ENCODE measurements at regions of chr3 and their contacts with region 1.

Region 1: GRCh38 chr3:32240159-32240545 is 1.7 kb downstream of the CMTM8 start:
- DNase-seq: no peak
- H3K4me3 ChIP-seq: peak overlapping the region in 2 of 3 donors; percentile 86 to 87
- H3K27ac ChIP-seq: peak overlapping the region in 1 of 2 donors; percentile 87
- H3K4me1 ChIP-seq: no peaks in the 10 kb centered on the region
- H3K27me3 ChIP-seq: no peaks in the 10 kb centered on the region
- CTCF ChIP-seq: peak in 1 of 3 donors; percentile 10
- POLR2A ChIP-seq: no peak

Region 2: DNA sequence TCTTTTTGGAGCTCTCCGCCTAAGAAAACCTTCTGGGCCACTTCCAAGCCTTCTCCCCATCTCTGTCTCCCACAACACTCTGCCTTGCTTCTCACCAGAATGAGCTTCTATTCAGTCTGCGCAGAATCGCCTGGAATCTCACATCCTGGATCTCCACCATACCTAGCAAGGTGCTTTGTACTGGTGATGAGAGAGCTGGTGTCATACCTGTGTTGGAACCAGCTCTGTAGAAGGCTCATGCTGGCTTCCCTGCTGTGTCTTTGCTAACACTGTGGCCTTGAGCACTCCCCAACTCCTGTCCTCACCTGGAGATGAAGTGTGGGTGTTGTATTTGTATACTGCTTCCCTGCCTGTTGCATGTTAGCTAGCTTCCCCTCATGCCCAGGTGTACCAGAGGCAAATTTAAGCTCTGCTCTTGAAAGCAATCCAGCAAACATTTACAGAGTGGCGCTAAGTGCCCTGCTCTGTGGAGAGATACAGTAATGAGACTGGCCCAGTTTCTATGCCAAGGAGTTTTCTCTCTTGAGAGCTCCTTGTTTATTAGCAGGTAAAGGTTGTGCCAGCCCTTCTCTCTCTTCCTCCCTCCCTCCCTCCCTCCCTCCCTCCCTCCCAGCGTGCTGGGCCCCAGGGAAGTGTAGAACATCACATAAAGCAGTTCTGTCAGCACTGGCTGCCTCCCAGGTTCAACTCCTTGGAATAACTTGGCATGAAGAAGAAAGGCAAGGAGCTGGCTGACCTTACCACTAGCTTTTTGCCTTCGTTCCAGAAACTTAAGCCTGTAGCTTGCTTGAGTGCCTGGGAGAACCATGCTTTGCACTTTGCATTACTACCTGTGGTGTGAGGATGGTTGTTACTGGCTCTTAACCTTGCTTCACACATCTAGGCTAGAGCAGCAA is 632.6 kb after region 1 on chr3:
- intact Hi-C with region 1: loop called (anchors 5 kb)
- DNase-seq: peak; percentile 73 to 79
- H3K4me3 ChIP-seq: no peak overlapping the region
- H3K27ac ChIP-seq: no peak overlapping the region
- H3K4me1 ChIP-seq: peaks cover 4 to 5% of the 10 kb centered on the region in 2 donors
- H3K27me3 ChIP-seq: peaks cover 0 to 15% of the 10 kb centered on the region in 2 donors
- CTCF ChIP-seq: no peak
- POLR2A ChIP-seq: no peak

Measured in breast epithelium (tissue), 4 donors.